AG04449 (cell line): ENCODE measurements at regions of chr11 and their contacts with region 1.

Region 1: GRCh38 chr11:108697872-108698473 is 33.1 kb downstream of the DDX10 start:
- DNase-seq: no peak
- H3K4me3 ChIP-seq: no peak overlapping the region
- CTCF ChIP-seq: peak; percentile 88

Region 2: GRCh38 chr11:108709741-108710140 is 11.8 kb after region 1 on chr11:
- CTCF ChIA-PET with region 1: interaction called, 13 read pairs
- POLR2A ChIA-PET with region 1: no interaction called
- DNase-seq: no peak
- H3K4me3 ChIP-seq: no peak overlapping the region
- CTCF ChIP-seq: no peak

Region 3: DNA sequence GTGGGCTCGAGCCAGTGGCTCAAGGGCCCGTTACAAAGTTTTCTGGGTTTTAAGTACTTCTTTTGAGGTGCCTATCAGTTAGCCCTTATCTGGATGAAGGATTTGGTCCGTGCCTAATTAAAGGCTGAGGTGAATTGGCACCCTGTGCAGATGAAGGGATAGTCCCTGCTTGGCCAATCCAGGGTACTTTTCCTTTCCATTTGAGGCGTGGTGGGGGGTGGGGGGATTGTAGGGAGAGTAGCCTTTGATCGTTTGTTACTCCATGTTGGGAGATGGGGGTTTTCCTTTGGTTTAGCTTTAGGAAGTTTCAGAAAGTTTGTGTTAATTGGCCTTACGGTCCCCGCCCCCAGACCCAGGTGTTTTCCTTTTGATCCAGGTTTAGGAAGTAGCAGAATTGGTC is 137.7 kb after region 1 on chr11:
- CTCF ChIA-PET with region 1: no interaction called
- POLR2A ChIA-PET with region 1: no interaction called
- DNase-seq: no peak
- H3K4me3 ChIP-seq: no peak overlapping the region
- CTCF ChIP-seq: no peak

Region 4: GRCh38 chr11:108871152-108871551 is 173.2 kb after region 1 on chr11:
- CTCF ChIA-PET with region 1: interaction called, 35 read pairs
- POLR2A ChIA-PET with region 1: interaction called, 3 read pairs
- DNase-seq: no peak
- H3K4me3 ChIP-seq: no peak overlapping the region
- CTCF ChIP-seq: peak; percentile 55

Region 5: DNA sequence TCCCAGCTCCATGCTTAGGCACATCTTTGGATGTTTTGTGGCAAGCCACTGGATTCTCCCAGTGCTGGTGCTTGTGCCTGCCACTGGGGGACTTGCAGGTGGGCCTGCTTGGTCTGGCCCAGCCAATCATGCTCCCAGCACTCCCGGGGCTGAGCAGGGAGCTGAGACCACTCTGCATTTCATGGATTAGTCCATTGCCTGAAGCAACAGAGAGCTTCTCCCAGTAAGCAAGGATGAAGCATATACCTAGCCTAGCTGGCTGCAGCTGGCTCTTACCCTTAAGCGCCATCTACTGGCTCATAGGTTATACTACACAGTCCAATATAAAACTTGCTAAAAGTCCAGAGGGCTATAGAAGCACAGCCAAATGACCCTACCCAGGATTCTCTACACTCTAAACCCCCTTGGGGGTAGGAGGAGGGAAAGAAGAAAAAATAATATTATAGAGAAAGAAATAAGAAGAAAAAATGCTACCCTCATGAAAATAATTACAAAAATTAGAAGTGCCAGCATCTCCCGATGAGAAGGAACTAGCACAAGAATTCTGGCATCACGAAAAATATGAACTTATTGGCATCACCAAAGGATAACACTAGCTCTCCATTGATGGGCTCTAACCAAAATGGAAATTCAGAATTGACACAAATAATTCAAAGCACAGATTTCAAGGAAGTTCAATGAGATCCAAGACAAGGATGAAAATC is 999.3 kb after region 1 on chr11:
- CTCF ChIA-PET with region 1: interaction called, 30 read pairs
- POLR2A ChIA-PET with region 1: no interaction called
- DNase-seq: no peak
- H3K4me3 ChIP-seq: no peak overlapping the region
- CTCF ChIP-seq: peak; percentile 68

Region 6: GRCh38 chr11:109939166-109939810 is 1241.3 kb after region 1 on chr11:
- CTCF ChIA-PET with region 1: interaction called, 34 read pairs
- POLR2A ChIA-PET with region 1: no interaction called
- DNase-seq: peak; percentile 49
- H3K4me3 ChIP-seq: no peak overlapping the region
- CTCF ChIP-seq: peak; percentile 53